Activated B cell treated with CpG ODN at 0.5 μM for 24 hours (primary cell): ENCODE measurements at regions of chr7 and their contacts with region 1.

Region 1: DNA sequence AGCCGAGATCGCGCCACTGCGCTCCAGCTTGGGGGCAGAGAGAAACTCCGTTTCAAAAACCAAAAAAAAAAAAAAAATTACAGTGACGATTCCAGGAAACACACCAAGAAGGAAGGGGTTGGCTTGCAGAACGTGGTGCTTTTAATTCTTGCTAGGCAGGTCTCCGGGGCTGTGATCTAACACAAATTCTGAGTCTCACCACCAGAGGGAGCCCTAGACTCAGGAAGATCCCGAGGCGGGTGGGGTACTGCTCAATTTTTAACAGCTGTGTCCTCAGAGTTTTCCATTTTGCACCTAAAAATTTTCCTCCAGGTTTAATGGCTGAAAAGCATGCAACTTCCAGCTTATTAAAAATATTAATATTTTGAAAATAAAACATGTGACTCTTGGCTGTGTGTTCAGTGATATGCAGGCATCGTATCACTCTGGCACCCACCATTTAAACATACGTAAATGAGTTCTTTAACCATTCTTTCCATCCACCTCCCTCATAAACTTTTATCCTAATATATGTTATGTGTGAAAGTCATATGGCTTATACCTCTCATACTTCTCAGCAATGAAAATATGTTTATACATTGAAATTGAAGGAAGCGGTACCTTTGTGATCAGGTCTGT is 26.5 kb upstream of the NUB1 start:
- DNase-seq: peak; percentile 41
- ATAC-seq: peak; percentile 87
- H3K4me3 Mint-ChIP-seq: no peak overlapping the region
- H3K27ac Mint-ChIP-seq: no peak overlapping the region
- H3K4me1 Mint-ChIP-seq: peaks cover 2% of the 10 kb centered on the region
- H3K27me3 Mint-ChIP-seq: no peaks in the 10 kb centered on the region
- CTCF ChIP-seq: no peak

Region 2: DNA sequence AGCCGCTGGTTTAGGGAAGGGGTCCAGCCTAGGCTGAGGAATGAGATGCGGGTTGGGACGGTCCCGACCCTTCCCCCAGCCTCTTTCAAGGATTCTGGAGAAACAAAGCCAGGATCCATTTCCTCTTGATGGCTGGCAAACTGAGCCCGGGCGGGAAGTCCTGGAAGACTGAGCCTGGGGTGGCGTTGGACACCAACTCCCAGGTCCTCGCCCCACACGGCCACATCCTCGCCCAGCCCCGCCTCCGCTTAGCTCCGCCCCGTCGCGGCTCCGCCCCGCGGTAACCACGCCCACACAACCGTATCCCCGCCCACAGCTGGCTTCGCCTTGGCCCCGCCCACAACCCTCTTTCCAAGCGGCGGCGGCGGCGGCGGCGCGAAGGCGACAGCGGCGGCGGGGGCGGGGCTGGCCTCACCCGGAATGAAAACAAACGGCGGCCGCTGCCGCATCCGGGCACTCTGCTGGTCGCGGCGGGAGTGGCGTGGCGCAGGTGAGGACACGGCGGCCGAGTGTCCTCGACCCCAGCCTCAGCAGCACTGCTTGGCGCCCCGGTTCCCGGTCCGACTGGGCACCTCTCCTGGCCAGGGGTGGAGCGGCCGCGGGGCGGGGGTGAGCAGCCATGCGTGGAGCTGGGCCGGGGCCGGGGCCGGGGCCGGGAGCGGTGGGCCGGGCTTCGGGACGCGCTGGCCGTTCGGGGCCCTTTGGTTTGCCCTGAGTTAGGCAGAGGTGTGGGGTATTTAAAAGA is 26.4 kb after region 1 on chr7 and contains the start of gene NUB1:
- CTCF ChIA-PET with region 1: interaction called, 34 read pairs
- POLR2A ChIA-PET with region 1: interaction called, 3 read pairs
- intact Hi-C with region 1: loop called (anchors 1 kb)
- DNase-seq: peak; percentile 99
- ATAC-seq: peak; percentile 90
- H3K4me3 Mint-ChIP-seq: peak within 1 kb of the TSS; percentile 86
- H3K27ac Mint-ChIP-seq: peak within 1 kb of the TSS; percentile 93
- H3K4me1 Mint-ChIP-seq: peaks cover 52% of the 10 kb centered on the region
- H3K27me3 Mint-ChIP-seq: no peaks in the 10 kb centered on the region
- CTCF ChIP-seq: no peak
- total RNA-seq, gene NUB1: 47.5 and 52.7 TPM in 2 replicates

Region 3: GRCh38 chr7:151925446-151926335 is 610.5 kb after region 1 on chr7:
- CTCF ChIA-PET with region 1: no interaction called
- POLR2A ChIA-PET with region 1: no interaction called
- intact Hi-C with region 1: no loop called
- DNase-seq: no peak
- ATAC-seq: peak; percentile 58
- H3K4me3 Mint-ChIP-seq: peak overlapping the region; percentile 72
- H3K27ac Mint-ChIP-seq: peak overlapping the region; percentile 76
- H3K4me1 Mint-ChIP-seq: peaks cover 11% of the 10 kb centered on the region
- H3K27me3 Mint-ChIP-seq: peaks cover 17% of the 10 kb centered on the region
- CTCF ChIP-seq: no peak